HepG2 (cell line): ENCODE measurements at regions of chr10 and their contacts with region 1.

Region 1: GRCh38 chr10:22316285-22317120 is at the start of gene COMMD3:
- DNase-seq: peak; percentile 58
- ATAC-seq: peak; percentile 85
- H3K4me3 ChIP-seq: peak within 1 kb of the TSS; percentile 75 to 82 (median 78)
- H3K27ac ChIP-seq: peak within 1 kb of the TSS; percentile 92
- H3K4me1 ChIP-seq: peaks cover 35% of the 10 kb centered on the region
- H3K27me3 ChIP-seq: peaks cover 0 to 16% of the 10 kb centered on the region in 2 experiments; a peak in 2 of 5 replicates
- CTCF ChIP-seq: no peak
- EP300 ChIP-seq: no peak
- POLR2A ChIP-seq: peak; percentile 90 to 92
- RAD21 ChIP-seq: peak; percentile 11; the same call in 1 of the 2 replicates
- total RNA-seq, gene COMMD3: 54.4 and 56.8 TPM in 2 replicates

Region 2: DNA sequence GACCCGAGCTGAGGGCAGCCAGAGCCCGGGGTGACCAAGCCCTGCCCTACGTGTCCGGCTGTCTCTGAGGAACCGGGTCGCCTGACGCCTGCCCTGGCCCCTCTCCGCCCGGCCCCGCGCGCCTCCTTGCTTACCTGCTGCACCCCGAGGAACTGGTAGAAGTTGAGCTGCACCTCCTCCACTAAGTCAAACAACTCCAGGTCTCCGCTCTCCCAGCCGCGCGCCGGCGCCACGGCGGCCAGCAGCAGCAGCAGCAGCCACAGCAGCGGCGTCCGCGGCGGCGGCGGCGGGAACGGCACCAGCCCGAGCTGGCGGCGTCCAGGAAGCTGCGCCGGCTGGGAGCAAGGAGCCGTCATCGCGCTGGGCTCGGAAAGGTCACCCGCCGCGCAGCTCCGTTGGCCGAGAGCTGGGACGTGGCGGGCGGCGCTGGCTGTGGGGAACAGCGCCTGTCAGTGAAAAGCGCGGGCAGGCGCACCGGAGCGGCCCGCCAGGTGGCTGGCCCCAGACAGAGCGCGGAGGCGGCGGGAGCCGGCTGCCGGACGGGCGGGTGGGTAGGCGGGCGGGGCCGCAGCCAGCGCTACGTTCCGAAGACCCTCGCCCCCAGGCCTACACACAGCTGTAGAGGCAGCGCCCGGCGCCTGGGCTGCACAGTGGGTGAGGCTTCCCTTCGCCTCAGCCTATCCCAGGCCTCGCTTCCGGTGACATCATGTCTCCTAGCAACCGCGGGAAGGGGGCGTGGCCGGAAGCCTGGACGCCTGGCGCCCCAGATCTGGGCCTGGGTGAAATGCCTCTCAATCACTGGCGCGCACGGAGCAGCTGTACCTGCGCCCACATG is 313.2 kb before region 1 on chr10 and contains the start of gene DNAJC1:
- CTCF ChIA-PET with region 1: no interaction called
- POLR2A ChIA-PET with region 1: interaction called, 10 read pairs
- in situ Hi-C with region 1: loop called (anchors 10 kb)
- intact Hi-C with region 1: loop called (anchors 2 kb)
- DNase-seq: peak; percentile 92
- ATAC-seq: peak; percentile 98
- H3K4me3 ChIP-seq: peak within 1 kb of the TSS; percentile 72 to 93 (median 83)
- H3K27ac ChIP-seq: peak within 1 kb of the TSS; percentile 84
- H3K4me1 ChIP-seq: peaks cover 20% of the 10 kb centered on the region
- H3K27me3 ChIP-seq: peaks cover 0 to 6% of the 10 kb centered on the region in 2 experiments; a peak in 1 of 5 replicates
- CTCF ChIP-seq: peak; percentile 8; the same call in 1 of the 2 replicates
- EP300 ChIP-seq: no peak
- POLR2A ChIP-seq: peak; percentile 66 to 77
- RAD21 ChIP-seq: peak; percentile 46; the same call in 1 of the 2 replicates
- total RNA-seq, gene DNAJC1: 8.8 and 16.6 TPM in 2 replicates

Region 3: DNA sequence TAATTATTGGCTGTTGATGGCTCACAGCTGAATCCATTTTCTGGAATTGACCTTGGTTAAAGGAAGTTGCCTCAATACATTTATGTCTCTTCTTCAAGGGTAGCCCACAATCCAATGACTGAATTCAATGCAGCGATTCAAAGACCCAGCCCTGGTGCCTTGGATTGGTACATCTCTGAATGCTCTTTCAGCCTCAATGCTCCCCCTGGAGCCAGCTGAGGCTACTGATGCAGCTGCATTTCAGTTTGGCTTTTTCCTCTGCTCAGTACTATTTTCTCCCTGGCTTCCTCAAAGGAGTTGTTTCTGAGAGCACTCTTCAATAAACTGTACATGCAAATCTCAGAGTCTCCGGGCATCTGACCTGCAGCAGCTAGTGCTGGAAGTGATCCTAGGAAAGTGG is 98.1 kb before region 1 on chr10:
- CTCF ChIA-PET with region 1: no interaction called
- POLR2A ChIA-PET with region 1: no interaction called
- in situ Hi-C with region 1: no loop called
- intact Hi-C with region 1: no loop called
- DNase-seq: peak; percentile 6
- ATAC-seq: peak; percentile 68
- H3K4me3 ChIP-seq: no peak overlapping the region
- H3K27ac ChIP-seq: no peak overlapping the region
- H3K4me1 ChIP-seq: no peaks in the 10 kb centered on the region
- H3K27me3 ChIP-seq: no peaks in the 10 kb centered on the region
- CTCF ChIP-seq: no peak
- EP300 ChIP-seq: no peak
- POLR2A ChIP-seq: no peak
- RAD21 ChIP-seq: no peak

Region 4: DNA sequence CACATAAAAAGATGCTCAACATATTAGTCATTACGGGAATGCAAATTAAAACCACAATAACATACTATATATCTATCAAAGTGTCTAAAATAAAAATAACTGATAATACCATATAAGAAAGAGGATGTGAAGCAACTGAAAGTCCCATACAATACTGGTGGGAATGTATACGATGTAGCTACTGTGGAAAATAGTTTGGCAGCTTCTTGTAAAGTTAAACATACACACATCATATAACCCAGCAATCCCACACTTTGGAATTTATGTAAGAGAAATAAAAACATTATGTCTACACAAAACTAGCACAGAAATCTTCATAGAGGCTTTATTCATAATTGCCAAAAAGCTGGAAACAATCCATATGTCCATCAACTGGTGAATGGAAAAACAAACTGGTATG is 10.8 kb before region 1 on chr10:
- CTCF ChIA-PET with region 1: no interaction called
- POLR2A ChIA-PET with region 1: no interaction called
- in situ Hi-C with region 1: no loop called
- intact Hi-C with region 1: no loop called
- DNase-seq: no peak
- ATAC-seq: no peak
- H3K4me3 ChIP-seq: no peak overlapping the region
- H3K27ac ChIP-seq: no peak overlapping the region
- H3K4me1 ChIP-seq: no peaks in the 10 kb centered on the region
- H3K27me3 ChIP-seq: no peaks in the 10 kb centered on the region
- CTCF ChIP-seq: no peak
- EP300 ChIP-seq: no peak
- POLR2A ChIP-seq: no peak
- RAD21 ChIP-seq: no peak

Region 5: GRCh38 chr10:22340362-22341189 is 24.1 kb after region 1 on chr10:
- CTCF ChIA-PET with region 1: no interaction called
- POLR2A ChIA-PET with region 1: interaction called, 23 read pairs
- in situ Hi-C with region 1: no loop called
- intact Hi-C with region 1: no loop called
- DNase-seq: peak; percentile 41
- ATAC-seq: peak; percentile 84
- H3K4me3 ChIP-seq: peak overlapping the region; percentile 69 to 83 (median 71)
- H3K27ac ChIP-seq: peak overlapping the region; percentile 75
- H3K4me1 ChIP-seq: peaks cover 12% of the 10 kb centered on the region
- H3K27me3 ChIP-seq: peaks cover 0 to 46% of the 10 kb centered on the region in 2 experiments; a peak in 3 of 5 replicates
- CTCF ChIP-seq: no peak
- EP300 ChIP-seq: no peak
- POLR2A ChIP-seq: peak in 1 of 2 experiments; percentile 45; a peak in 3 of 4 replicates
- RAD21 ChIP-seq: peak; percentile 57; the same call in 1 of the 2 replicates

Region 6: GRCh38 chr10:22620140-22620857 is 303.8 kb after region 1 on chr10:
- CTCF ChIA-PET with region 1: no interaction called
- POLR2A ChIA-PET with region 1: no interaction called
- in situ Hi-C with region 1: no loop called
- intact Hi-C with region 1: loop called (anchors 5 kb)
- DNase-seq: no peak
- ATAC-seq: no peak
- H3K4me3 ChIP-seq: no peak overlapping the region
- H3K27ac ChIP-seq: no peak overlapping the region
- H3K4me1 ChIP-seq: peaks cover 90% of the 10 kb centered on the region
- H3K27me3 ChIP-seq: no peaks in the 10 kb centered on the region
- CTCF ChIP-seq: no peak
- EP300 ChIP-seq: no peak
- POLR2A ChIP-seq: no peak
- RAD21 ChIP-seq: no peak

Region 7: DNA sequence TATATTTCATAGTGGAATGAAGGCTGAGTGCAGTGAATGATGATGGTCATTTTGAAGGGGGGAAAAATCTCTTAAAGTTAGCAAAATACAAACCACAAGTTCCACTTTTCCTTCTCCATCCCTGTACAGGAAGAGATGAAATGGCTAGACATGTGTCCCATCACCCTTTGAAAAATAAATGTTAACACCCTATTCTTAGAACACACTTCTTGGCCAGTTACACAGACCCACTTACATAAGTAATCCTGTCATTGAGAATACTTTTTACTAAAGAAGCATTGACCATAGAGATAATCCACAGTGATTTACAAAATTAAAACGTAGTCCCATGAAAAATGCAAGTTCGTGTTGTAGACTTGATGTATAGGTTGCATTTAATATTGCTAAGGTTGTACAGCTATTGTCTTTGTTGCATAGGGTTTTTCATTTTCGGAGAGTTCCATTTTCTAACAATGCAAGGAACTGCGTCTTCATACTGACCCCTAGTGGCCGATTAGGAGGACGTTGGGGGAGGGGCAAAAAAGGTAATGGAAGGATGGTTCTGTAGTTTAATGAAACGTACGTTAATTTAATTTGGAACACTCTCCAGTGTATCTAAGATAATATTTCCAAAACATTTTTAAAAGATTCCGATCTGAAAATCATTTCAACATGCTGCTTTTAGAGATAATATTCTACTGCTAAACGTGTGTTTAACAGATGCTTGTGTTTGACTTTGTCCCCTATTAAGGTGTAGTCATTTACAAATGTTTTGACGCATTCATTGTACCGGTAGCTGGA is 672.3 kb after region 1 on chr10:
- CTCF ChIA-PET with region 1: no interaction called
- POLR2A ChIA-PET with region 1: no interaction called
- in situ Hi-C with region 1: no loop called
- intact Hi-C with region 1: loop called (anchors 5 kb)
- DNase-seq: peak; percentile 34
- ATAC-seq: peak; percentile 44
- H3K4me3 ChIP-seq: no peak overlapping the region; a peak in 1 of 6 replicates
- H3K27ac ChIP-seq: no peak overlapping the region
- H3K4me1 ChIP-seq: peaks cover 11% of the 10 kb centered on the region; the same call in 1 of the 2 replicates
- H3K27me3 ChIP-seq: peaks cover 2% of the 10 kb centered on the region in 2 experiments; a peak in 1 of 5 replicates
- CTCF ChIP-seq: peak; percentile 85
- EP300 ChIP-seq: no peak
- POLR2A ChIP-seq: no peak
- RAD21 ChIP-seq: peak; percentile 76